Aorta (tissue), 5 donors: ENCODE measurements at regions of chr5 and their contacts with region 1.

Region 1: DNA sequence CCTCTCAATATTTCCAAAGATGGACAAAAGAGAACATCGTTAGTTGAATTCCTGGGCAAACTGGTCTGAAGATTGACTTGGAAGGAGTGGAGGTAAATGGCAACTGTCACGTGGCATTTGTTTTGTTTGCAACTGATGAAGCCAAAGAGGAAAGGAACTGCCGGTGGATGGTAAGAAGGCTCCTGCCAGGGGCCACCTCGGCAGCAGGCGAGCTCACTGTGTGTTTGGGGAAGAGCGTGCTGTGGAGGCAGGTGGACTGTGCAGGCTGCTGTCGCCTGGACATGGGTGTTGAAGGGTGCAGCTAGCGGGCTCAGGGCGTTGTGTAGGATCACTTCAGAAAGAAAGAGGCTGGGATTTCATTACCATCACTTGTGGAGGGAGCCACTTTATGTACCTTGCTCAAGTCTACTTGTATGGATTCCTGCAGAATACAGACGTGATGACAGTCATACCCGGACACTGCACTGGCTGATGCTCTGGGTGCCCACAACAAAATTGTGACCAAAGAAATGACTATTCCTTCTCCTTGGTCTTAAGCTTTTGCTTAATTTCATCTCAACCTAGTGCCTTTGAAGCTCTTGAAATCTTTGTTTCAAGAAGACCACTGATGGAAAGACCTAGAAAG is 72.7 kb downstream of the MAP1B start:
- DNase-seq: no peak
- ATAC-seq: peak; percentile 64
- H3K4me3 ChIP-seq: peak overlapping the region; percentile 45 to 62
- H3K27ac ChIP-seq: peak overlapping the region; percentile 92 to 98
- H3K4me1 ChIP-seq: peaks cover 4 to 6% of the 10 kb centered on the region in 2 donors
- H3K27me3 ChIP-seq: no peaks in the 10 kb centered on the region

Region 2: DNA sequence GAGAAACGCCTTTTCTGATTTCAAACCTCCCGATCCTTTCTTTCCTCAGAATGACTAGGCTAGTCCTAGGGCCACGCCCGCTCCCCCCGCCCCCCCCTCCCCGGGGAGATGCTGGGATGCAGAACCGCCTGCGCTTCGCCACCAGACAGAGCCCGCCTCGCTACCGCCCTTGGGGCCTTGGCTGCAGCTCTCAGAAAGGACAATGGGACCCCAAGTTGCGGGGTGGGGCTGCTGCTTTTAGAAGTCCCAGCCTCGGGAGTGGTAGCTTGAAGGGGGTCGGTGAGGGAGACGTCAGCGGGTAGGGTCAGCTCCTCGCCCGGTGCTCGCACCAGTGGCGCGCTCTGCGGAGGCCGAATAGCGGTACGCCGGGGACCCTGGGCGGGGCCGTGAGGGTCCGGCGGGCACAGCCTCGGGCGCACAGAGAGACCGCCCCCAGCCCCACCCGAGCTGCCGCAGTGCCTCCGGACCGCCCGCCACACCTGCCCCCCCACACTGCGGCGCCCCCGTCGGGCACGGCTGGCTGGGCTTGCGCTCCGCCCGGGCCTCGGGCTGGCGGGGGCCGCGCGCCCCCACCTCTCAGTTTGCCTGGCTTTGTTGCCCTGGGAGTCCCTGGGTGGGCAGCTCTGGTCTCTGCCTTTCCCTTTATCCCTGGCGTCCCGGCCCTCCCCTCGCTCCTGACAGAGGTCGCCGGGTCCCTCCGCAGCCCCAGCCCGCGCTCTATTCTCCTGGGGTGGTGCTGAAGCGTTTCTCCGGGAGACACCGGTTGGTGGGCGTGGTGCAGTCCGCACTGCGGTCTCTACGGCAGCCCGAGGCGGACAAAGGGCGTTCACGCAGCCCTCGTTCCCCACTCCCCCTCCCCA is 71.5 kb before region 1 on chr5:
- intact Hi-C with region 1: loop called in 1 of 2 experiments (anchors 5 kb)
- DNase-seq: peak; percentile 90 to 93
- ATAC-seq: peak; percentile 83
- H3K4me3 ChIP-seq: peak overlapping the region; percentile 88 to 96
- H3K27ac ChIP-seq: peak overlapping the region; percentile 93 to 96
- H3K4me1 ChIP-seq: peaks cover 0 to 2% of the 10 kb centered on the region in 2 donors
- H3K27me3 ChIP-seq: no peaks in the 10 kb centered on the region

Region 3: DNA sequence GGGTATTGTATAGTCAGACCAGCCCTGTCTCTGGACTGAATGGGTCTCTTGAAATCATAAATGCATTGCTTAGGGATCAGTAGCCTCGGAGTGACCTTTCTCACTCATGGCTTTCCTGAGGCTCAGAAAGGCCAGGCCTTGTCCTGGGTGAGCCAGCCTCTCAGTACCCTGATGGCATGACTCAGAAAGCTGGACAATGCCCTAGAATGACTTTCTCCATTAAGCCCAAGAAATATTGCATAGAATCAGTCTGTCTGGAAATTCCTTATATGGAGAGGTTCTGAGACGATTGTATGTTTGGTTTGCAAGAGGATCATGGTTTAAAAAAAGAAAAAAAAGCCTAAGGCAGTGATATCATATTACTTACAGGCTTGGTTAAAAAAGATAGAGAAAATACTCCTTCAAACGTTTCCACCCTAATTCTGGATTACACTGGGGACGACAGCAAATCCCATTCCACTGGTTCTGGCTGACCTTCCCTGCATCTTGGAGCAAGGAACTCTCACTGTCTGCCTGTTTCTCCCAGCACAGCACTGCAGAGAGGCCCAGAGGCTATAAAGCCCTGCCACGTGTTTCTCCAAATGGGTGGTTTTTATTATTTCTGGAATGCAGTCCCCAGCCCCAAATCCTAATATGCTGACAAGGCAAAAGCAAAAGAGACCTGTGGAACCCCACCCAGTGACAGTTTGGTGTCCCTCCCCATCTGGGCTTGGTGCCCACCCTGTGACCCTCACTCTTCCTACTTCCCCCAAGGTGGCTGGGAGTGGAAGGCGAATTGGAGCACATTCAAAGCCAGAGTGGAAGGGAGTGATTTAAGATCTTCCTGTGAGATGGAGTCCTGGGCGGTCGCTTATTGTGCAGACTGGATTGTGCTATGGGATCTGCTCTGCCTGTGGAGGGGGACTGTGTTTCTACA is 38.2 kb before region 1 on chr5:
- intact Hi-C with region 1: loop called in 1 of 2 experiments (anchors 5 kb)
- DNase-seq: peak in 1 of 2 donors; percentile 66
- ATAC-seq: peak; percentile 85
- H3K4me3 ChIP-seq: no peak overlapping the region
- H3K27ac ChIP-seq: peak overlapping the region; percentile 96 to 100
- H3K4me1 ChIP-seq: peaks cover 12 to 38% of the 10 kb centered on the region in 2 donors
- H3K27me3 ChIP-seq: no peaks in the 10 kb centered on the region